Dendritic cell treated with granulocyte-macrophage colony-stimulating factor and Interleukin-4, amounts not matched to agents 40 ng/mL and 50 ng/mL, for 4 days (primary cell): ENCODE measurements at regions of chr12 and their contacts with region 1.

Region 1: DNA sequence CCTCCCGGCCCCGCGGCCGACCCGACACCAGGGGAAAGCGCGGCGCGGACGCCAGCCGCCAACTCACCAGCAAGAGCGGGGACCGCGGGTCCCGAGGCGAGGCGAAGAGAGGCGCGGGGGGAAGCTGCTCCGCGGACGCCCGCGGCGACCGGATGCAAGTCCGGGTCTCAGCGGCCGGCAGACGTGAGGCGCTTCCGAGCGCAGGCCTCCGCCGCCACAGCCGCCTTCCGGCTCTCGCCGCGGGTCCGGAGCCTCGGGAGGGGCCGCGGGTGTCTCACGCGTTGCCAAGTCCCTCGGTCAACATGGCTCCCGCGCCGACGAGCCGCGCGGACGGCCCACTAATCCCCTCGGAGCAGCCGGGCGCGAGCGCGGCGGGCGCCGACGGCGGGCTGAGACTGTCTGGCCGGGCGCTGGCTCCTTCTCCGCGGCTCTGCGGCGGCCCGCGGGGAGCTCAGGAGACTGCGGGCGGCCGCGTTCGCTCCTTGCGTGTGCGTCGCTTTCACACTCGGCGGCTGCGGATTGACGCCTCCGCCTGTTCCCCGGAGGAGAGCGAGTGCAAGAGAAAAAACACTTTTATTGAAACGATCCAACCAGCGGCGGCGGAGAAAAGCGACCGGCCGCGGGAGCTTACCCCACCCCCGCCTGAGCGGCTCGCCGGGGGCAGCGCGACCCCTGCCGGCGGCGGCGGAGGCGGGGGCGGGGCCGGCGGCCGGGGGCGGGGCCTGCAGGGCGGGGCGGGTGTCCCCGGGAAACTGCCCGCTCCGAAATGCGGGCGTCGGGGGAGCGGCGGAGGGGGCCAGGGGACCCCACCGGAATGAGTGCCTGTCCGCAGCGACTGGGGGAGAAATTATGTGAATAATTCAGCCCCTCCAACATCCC is at the start of gene CDK17:
- H3K4me3 Mint-ChIP-seq: peak within 1 kb of the TSS; percentile 90
- H3K27ac Mint-ChIP-seq: peak within 1 kb of the TSS; percentile 92
- H3K4me1 Mint-ChIP-seq: peaks cover 21% of the 10 kb centered on the region
- H3K27me3 Mint-ChIP-seq: no peaks in the 10 kb centered on the region

Region 2: GRCh38 chr12:96035278-96036236 is 364.6 kb before region 1 on chr12 and contains the start of gene LTA4H:
- intact Hi-C with region 1: loop called (anchors 5 kb)
- H3K4me3 Mint-ChIP-seq: no peak within 1 kb of the TSS
- H3K27ac Mint-ChIP-seq: no peak within 1 kb of the TSS
- H3K4me1 Mint-ChIP-seq: peaks cover 12% of the 10 kb centered on the region
- H3K27me3 Mint-ChIP-seq: no peaks in the 10 kb centered on the region

Region 3: GRCh38 chr12:96061864-96062453 is 338.2 kb before region 1 on chr12:
- intact Hi-C with region 1: loop called (anchors 5 kb)
- H3K4me3 Mint-ChIP-seq: no peak overlapping the region
- H3K27ac Mint-ChIP-seq: no peak overlapping the region
- H3K4me1 Mint-ChIP-seq: peaks cover 34% of the 10 kb centered on the region
- H3K27me3 Mint-ChIP-seq: no peaks in the 10 kb centered on the region

Region 4: DNA sequence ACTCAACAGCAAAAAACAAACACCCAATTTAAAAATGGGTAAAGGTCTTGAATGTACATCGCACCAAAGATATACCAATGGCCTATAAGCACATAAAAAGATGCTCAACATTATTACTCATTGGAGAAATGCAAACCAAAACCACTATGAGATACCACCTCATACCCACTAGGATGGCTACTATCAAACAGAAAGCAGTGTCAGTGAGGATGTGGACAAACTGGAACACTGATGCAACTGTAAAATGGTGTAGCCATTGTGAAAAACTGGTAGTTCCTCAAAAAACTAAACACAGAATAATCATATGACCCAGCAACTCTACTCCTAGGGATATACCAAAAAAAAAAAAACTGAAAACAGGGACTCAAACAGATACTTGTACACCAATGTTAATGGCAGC is 49.2 kb before region 1 on chr12:
- intact Hi-C with region 1: loop called (anchors 5 kb)
- H3K4me3 Mint-ChIP-seq: no peak overlapping the region
- H3K27ac Mint-ChIP-seq: peak overlapping the region; percentile 70
- H3K4me1 Mint-ChIP-seq: peaks cover 67% of the 10 kb centered on the region
- H3K27me3 Mint-ChIP-seq: no peaks in the 10 kb centered on the region

Region 5: DNA sequence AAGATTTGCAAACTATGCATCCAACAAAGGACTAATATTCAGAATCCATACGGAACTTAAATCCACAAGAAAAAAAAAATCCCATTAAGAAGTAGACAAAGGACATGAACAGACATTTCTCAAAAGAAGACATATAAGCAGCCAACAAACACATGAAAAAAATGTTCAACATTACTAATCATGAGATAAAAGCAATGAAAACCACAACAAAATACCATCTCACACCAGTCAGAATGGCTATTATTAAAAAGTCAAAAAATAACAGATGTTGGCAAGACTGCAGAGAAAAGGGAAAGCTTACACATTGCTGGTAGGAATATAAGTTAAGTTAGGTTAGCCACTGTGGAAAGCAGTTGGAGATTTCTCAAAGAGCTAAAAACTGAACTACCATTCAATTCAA is 16.2 kb before region 1 on chr12:
- intact Hi-C with region 1: no loop called
- H3K4me3 Mint-ChIP-seq: no peak overlapping the region
- H3K27ac Mint-ChIP-seq: no peak overlapping the region
- H3K4me1 Mint-ChIP-seq: peaks cover 35% of the 10 kb centered on the region
- H3K27me3 Mint-ChIP-seq: no peaks in the 10 kb centered on the region

Region 6: DNA sequence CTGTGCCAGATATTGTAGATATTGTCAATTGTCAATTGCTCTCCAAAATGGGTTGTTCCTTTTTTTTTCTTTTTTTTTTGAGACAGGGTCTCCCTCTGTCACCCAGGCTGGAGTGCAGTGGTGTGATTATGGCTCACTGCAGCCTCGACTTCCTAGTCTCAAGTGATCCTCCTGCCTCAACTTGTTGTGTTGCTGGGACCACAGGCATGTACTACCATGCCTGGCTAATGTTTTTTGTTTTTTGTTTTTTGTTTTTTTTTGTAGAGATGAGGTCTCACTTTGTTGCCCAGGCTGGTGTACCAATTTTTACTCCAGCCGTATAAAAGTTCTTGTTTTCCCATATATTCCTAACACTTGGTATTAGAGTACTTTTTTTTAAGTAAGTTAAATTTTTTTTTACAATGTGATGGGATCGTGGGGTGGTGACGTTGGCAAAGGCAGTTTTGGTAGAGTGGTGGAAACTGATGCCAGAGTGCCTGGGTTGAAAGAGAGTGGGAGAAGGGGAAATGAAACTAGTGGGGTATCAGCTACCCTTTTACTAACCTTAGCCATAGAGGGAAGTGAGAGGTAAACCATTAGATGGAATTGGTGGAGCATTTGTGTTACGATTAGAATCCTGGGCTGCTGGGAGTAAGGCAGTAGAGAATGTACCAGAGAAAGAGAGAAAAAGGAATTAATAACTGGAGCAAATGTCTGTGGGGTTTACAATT is 56.3 kb after region 1 on chr12:
- intact Hi-C with region 1: loop called (anchors 10 kb)
- H3K4me3 Mint-ChIP-seq: no peak overlapping the region
- H3K27ac Mint-ChIP-seq: no peak overlapping the region
- H3K4me1 Mint-ChIP-seq: peaks cover 31% of the 10 kb centered on the region
- H3K27me3 Mint-ChIP-seq: peaks cover 2% of the 10 kb centered on the region

Region 7: GRCh38 chr12:96489103-96490056 is 89.2 kb after region 1 on chr12 and contains the start of gene CFAP54:
- intact Hi-C with region 1: loop called (anchors 5 kb)
- H3K4me3 Mint-ChIP-seq: peak within 1 kb of the TSS; percentile 72
- H3K27ac Mint-ChIP-seq: peak within 1 kb of the TSS; percentile 68
- H3K4me1 Mint-ChIP-seq: peaks cover 14% of the 10 kb centered on the region
- H3K27me3 Mint-ChIP-seq: peaks cover 30% of the 10 kb centered on the region

Region 8: GRCh38 chr12:96516472-96517430 is 116.6 kb after region 1 on chr12:
- intact Hi-C with region 1: loop called (anchors 10 kb)
- H3K4me3 Mint-ChIP-seq: no peak overlapping the region
- H3K27ac Mint-ChIP-seq: no peak overlapping the region
- H3K4me1 Mint-ChIP-seq: no peaks in the 10 kb centered on the region
- H3K27me3 Mint-ChIP-seq: no peaks in the 10 kb centered on the region